ENCODE measurements at regions of chr3 and their contacts with region 1.

Region 1: DNA sequence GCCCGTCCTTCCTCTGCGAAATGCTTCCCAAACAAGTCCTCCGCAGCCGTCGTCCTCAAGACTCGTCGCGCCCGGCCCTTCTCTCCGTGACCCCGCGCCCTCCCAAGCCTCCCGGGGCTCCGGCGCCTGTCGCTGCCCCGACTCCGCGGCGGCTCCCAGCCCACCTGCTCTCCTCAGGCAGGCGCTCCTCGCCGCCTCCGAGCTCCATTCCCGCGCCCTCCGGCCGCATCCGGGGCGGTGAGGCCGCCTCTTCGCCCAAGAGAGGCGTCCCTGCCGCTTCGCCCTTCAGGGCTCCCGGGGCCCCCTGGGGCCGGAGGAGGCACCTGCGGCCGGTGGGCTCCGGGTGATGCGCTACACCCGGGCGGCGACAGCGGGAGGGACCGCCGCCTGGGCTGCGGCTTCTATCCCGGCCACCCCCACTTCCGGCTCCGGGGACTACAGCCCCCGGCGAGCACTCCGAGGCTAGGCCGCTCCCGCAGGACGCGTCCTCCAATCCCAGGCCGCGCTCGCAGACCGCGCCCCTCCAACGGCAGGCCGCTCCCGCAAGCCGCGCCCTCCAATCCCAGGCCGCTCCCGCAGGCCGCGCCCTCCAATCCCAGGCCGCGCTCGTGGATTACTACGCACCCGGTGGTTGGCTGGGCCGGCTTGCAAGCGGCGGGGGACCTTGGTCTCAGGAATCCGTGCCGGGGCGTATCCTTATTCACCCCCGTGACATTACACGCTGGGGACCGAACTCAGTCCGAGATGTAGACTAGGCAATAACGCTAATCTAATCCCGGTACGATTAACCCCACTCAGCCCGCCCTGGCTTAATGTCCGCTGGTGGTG is at the start of gene RUBCN:
- DNase-seq: peak; percentile 97
- H3K4me3 ChIP-seq: peak within 1 kb of the TSS; percentile 83
- H3K27ac ChIP-seq: peak within 1 kb of the TSS; percentile 94
- H3K4me1 ChIP-seq: peaks cover 47% of the 10 kb centered on the region
- CTCF ChIP-seq: no peak
- total RNA-seq, gene RUBCN: 37.1 and 45.1 TPM in 2 replicates

Region 2: GRCh38 chr3:197674741-197675562 is 61.8 kb before region 1 on chr3:
- CTCF ChIA-PET with region 1: no interaction called
- POLR2A ChIA-PET with region 1: interaction called, 6 read pairs
- intact Hi-C with region 1: loop called (anchors 2 kb)
- DNase-seq: peak; percentile 91
- H3K4me3 ChIP-seq: no peak overlapping the region
- H3K27ac ChIP-seq: peak overlapping the region; percentile 76
- H3K4me1 ChIP-seq: peaks cover 23% of the 10 kb centered on the region
- CTCF ChIP-seq: no peak

Region 3: DNA sequence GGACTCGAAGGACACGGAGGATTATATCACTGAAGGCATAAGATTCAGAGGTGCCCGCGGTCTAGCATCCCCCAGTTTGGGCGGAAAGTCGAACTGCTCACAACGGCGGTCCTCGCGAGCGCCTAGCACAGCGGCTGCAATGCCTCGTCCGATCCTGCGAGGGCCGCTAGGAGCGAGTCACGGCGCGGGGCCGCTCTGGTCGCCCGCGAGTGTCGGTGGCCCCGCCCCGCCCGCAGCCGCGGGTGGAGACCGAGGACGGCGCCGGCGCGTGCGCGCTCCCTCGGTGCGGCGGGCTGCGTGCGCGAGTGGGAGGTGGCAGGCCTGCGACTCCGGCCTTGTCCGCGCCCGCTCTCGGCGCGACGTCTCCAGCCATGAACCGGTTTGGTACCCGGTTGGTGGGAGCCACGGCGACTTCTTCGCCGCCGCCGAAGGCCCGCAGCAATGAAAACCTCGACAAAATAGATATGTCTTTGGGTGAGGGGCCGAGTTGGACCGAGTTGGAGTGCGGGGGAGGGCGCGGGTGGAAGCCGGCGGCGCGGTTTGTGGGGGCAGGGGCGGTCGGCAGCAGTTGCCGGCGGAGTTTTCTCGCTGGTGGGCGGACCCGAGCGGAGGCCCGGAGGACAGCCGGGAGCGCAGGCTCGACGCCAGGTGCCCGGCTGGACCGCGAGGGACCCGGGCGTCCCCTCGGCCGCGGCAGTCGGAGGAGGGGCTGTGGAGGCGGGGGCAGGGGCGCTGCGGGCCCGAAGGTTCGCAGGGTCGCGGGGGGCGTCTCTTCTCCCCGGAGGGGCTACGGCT is 13.1 kb after region 1 on chr3 and contains the start of gene FYTTD1:
- CTCF ChIA-PET with region 1: interaction called, 3 read pairs
- POLR2A ChIA-PET with region 1: interaction called, 13 read pairs
- intact Hi-C with region 1: loop called (anchors 1 kb)
- DNase-seq: peak; percentile 94
- H3K4me3 ChIP-seq: peak within 1 kb of the TSS; percentile 89
- H3K27ac ChIP-seq: peak within 1 kb of the TSS; percentile 76
- H3K4me1 ChIP-seq: peaks cover 41% of the 10 kb centered on the region
- CTCF ChIP-seq: peak; percentile 65
- total RNA-seq, gene FYTTD1: 47.6 and 63.8 TPM in 2 replicates

Region 4: GRCh38 chr3:197791113-197791891 is 54.6 kb after region 1 on chr3 and contains the start of gene LRCH3:
- CTCF ChIA-PET with region 1: interaction called, 3 read pairs
- POLR2A ChIA-PET with region 1: no interaction called
- intact Hi-C with region 1: loop called (anchors 2 kb)
- DNase-seq: peak; percentile 88
- H3K4me3 ChIP-seq: peak within 1 kb of the TSS; percentile 84
- H3K27ac ChIP-seq: peak within 1 kb of the TSS; percentile 84
- H3K4me1 ChIP-seq: peaks cover 36% of the 10 kb centered on the region
- CTCF ChIP-seq: no peak
- total RNA-seq, gene LRCH3: 39.0 and 44.2 TPM in 2 replicates